Endothelial cell of umbilical vein (primary cell): ENCODE measurements at regions of chr3 and their contacts with region 1.

Region 1: GRCh38 chr3:121834696-121835464 is at the starts of genes EAF2 and IQCB1:
- DNase-seq: peak; percentile 98
- H3K4me3 ChIP-seq: peak within 1 kb of the TSS; percentile 70 to 93 (median 72)
- H3K27ac ChIP-seq: peak within 1 kb of the TSS; percentile 67
- H3K4me1 ChIP-seq: peaks cover 8% of the 10 kb centered on the region
- H3K27me3 ChIP-seq: peaks cover 0 to 3% of the 10 kb centered on the region in 2 experiments
- CTCF ChIP-seq: no peak
- POLR2A ChIP-seq: no peak
- total RNA-seq, gene EAF2: 1.5 and 1.6 TPM in 2 replicates
- total RNA-seq, gene IQCB1: 21.6 and 22.0 TPM in 2 replicates

Region 2: DNA sequence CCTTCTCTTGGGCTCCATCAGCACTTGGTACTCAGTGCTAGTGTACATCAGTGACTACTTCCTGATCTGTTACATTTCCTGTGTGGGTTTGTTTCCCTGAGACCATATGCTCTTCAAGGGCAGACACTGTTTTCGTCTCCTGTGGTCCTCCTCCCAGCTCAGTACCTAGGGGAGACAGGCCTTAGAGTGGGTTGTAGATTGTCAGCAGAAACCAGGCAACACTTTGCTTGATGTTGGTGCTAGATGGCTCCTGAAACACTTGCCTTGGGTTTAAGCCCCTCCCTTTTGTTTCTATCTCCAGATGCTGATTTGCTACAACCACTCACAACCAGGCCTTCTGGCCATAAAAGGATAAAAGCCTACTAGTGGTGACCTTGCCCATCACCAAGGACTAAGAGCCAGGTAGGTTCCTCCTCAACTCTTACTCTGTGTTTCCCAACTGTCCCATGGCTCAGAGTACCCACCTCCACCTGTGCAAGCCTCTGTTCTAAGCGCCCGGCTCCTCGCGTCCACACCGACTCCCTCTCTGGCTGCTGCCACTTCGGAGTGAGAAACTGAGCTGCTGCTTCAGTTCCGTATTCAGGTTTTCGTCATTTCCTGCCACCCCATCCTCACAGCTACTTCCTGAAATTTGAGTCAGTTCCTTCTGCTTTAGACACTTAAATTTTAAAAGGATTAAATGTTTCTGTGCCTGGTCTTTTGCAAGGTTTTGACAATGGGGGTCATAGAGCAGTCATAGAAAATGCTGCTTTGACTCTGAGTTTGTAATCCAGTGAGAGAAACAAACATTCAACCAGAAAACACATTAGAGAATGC is 174.3 kb before region 1 on chr3 and contains the start of gene HCLS1:
- CTCF ChIA-PET with region 1: no interaction called
- POLR2A ChIA-PET with region 1: no interaction called
- dilution Hi-C with region 1: no loop called
- intact Hi-C with region 1: loop called (anchors 5 kb)
- DNase-seq: peak; percentile 72
- H3K4me3 ChIP-seq: peak within 1 kb of the TSS; percentile 34 to 76 (median 36)
- H3K27ac ChIP-seq: peak within 1 kb of the TSS; percentile 89
- H3K4me1 ChIP-seq: peaks cover 22% of the 10 kb centered on the region
- H3K27me3 ChIP-seq: no peaks in the 10 kb centered on the region
- CTCF ChIP-seq: no peak
- POLR2A ChIP-seq: peak; percentile 85
- total RNA-seq, gene HCLS1: 63.5 and 68.5 TPM in 2 replicates

Region 3: GRCh38 chr3:121749276-121750086 is 85.4 kb before region 1 on chr3 and contains the start of gene GOLGB1:
- CTCF ChIA-PET with region 1: no interaction called
- POLR2A ChIA-PET with region 1: no interaction called
- dilution Hi-C with region 1: no loop called
- intact Hi-C with region 1: loop called (anchors 1 kb)
- DNase-seq: peak; percentile 99
- H3K4me3 ChIP-seq: peak within 1 kb of the TSS; percentile 49 to 84 (median 64)
- H3K27ac ChIP-seq: peak within 1 kb of the TSS; percentile 74
- H3K4me1 ChIP-seq: peaks cover 20% of the 10 kb centered on the region
- H3K27me3 ChIP-seq: peaks cover 5 to 17% of the 10 kb centered on the region in 2 experiments
- CTCF ChIP-seq: no peak
- POLR2A ChIP-seq: peak; percentile 96
- total RNA-seq, gene GOLGB1: 32.2 and 42.7 TPM in 2 replicates

Region 4: GRCh38 chr3:121871430-121871829 is 36.5 kb after region 1 on chr3:
- CTCF ChIA-PET with region 1: no interaction called
- POLR2A ChIA-PET with region 1: no interaction called
- dilution Hi-C with region 1: no loop called
- intact Hi-C with region 1: no loop called
- DNase-seq: no peak
- H3K4me3 ChIP-seq: no peak overlapping the region
- H3K27ac ChIP-seq: no peak overlapping the region
- H3K4me1 ChIP-seq: no peaks in the 10 kb centered on the region
- H3K27me3 ChIP-seq: no peaks in the 10 kb centered on the region
- CTCF ChIP-seq: no peak
- POLR2A ChIP-seq: no peak

Region 5: GRCh38 chr3:122635789-122636188 is 800.9 kb after region 1 on chr3:
- CTCF ChIA-PET with region 1: no interaction called
- POLR2A ChIA-PET with region 1: no interaction called
- dilution Hi-C with region 1: no loop called
- intact Hi-C with region 1: no loop called
- DNase-seq: no peak
- H3K4me3 ChIP-seq: no peak overlapping the region
- H3K27ac ChIP-seq: no peak overlapping the region
- H3K4me1 ChIP-seq: no peaks in the 10 kb centered on the region
- H3K27me3 ChIP-seq: peaks cover 14 to 17% of the 10 kb centered on the region in 2 experiments
- CTCF ChIP-seq: no peak
- POLR2A ChIP-seq: no peak